PC-9 (cell line): ENCODE measurements at regions of chr1 and their contacts with region 1.

Region 1: DNA sequence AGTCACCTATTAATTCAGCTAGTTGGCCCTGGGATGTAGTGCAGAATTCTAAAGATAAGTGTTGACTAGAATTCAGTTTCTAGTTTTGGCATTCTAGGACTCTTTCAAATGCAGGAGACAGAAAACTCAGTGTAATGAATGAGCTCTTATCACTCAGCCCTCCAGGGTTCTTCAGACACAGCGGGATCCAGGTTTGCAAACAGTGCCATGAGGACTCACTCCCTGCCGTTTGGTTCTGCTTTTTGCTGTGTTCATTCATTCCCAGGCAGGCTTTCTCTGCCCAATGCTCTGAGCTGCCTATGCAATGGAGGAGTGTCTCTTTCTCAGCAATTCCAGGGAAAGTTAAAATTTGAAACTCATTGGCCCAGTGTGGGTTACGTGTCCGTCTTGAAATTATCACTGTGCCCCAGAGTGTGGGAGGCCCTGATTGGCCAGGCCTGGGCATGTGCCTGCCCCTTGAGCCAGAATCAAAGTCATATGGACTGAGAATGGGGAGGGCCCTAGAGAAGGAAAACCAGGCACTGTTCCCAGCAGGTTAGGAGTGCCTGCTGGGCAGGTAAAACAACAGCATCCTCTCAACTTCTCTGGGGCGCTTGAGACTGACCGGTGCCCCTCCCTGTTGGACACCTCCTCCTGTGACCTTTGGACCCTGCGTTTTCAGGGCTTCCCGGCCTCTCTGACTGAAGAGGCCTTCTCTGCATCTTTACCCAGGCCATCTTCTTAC is 43.4 kb downstream of the TMEM51 start:
- DNase-seq: peak in 1 of 2 experiments; percentile 26
- H3K4me3 ChIP-seq: no peak overlapping the region
- H3K27ac ChIP-seq: no peak overlapping the region
- H3K4me1 ChIP-seq: peaks cover 21% of the 10 kb centered on the region
- H3K27me3 ChIP-seq: no peaks in the 10 kb centered on the region
- CTCF ChIP-seq: no peak

Region 2: GRCh38 chr1:14741096-14741495 is 455.9 kb before region 1 on chr1:
- CTCF ChIA-PET with region 1: no interaction called
- POLR2A ChIA-PET with region 1: interaction called, 12 read pairs
- intact Hi-C with region 1: no loop called
- DNase-seq: no peak
- H3K4me3 ChIP-seq: no peak overlapping the region
- H3K27ac ChIP-seq: no peak overlapping the region
- H3K4me1 ChIP-seq: no peaks in the 10 kb centered on the region
- H3K27me3 ChIP-seq: peaks cover 24% of the 10 kb centered on the region
- CTCF ChIP-seq: no peak

Region 3: GRCh38 chr1:15090373-15090772 is 106.6 kb before region 1 on chr1:
- CTCF ChIA-PET with region 1: no interaction called
- POLR2A ChIA-PET with region 1: no interaction called
- intact Hi-C with region 1: no loop called
- DNase-seq: peak; percentile 84 to 91
- H3K4me3 ChIP-seq: peak overlapping the region; percentile 39; the same call in 1 of the 2 replicates
- H3K27ac ChIP-seq: no peak overlapping the region
- H3K4me1 ChIP-seq: peaks cover 28% of the 10 kb centered on the region
- H3K27me3 ChIP-seq: no peaks in the 10 kb centered on the region
- CTCF ChIP-seq: no peak